Activated CD8-positive, alpha-beta memory T cell treated with anti-CD3 and anti-CD28 coated beads, Interleukin-2, amount 10 ng/mL, durations not matched to agents 7 days and 5 days (primary cell): ENCODE measurements at regions of chr4 and their contacts with region 1.

Region 1: GRCh38 chr4:5998333-5998936 is 19.8 kb downstream of the C4orf50 start:
- DNase-seq: peak; percentile 66
- ATAC-seq: peak; percentile 77
- H3K4me3 Mint-ChIP-seq: no peak overlapping the region
- H3K27ac Mint-ChIP-seq: no peak overlapping the region
- H3K4me1 Mint-ChIP-seq: peaks cover 18% of the 10 kb centered on the region
- H3K27me3 Mint-ChIP-seq: peaks cover 7% of the 10 kb centered on the region

Region 2: GRCh38 chr4:5957076-5957475 is 41.4 kb before region 1 on chr4:
- CTCF ChIA-PET with region 1: no interaction called
- DNase-seq: no peak
- ATAC-seq: no peak
- H3K4me3 Mint-ChIP-seq: no peak overlapping the region
- H3K27ac Mint-ChIP-seq: no peak overlapping the region
- H3K4me1 Mint-ChIP-seq: peaks cover 16% of the 10 kb centered on the region
- H3K27me3 Mint-ChIP-seq: no peaks in the 10 kb centered on the region

Region 3: DNA sequence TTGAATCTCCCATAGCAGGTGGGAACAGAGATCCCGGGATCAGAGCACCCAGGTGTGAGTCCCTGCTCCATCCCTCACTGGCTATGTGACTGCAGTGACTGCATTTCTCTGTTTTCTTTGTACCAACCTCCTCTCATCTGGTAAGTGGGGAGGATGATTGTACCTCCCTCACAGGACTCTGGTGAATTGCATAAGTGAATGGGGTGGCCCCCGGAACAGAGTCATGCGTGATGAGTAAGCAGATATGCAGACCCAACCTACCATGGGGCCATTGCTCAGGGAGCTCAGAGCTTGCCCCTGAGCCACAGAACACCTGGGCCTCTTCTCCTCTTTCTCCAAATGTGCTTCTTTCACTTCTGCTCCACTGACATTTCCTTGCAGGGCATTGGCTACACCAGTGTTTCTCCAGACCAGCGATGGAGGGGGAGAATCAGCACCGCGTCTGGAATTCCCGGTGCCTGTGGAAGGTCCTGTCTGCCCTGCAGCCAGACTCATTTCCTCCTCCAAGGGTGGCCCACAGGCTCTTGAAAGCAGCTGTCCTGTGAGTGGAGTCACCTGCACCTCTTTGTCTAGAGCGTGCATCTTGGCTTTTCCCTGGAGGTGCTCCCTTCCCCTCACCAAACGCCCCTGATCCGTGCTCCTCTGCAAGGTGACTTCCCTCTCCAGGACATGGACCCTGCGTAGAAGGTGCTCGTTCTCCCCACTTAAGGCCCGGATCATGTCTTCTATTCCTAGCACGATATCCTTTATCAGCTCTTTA is 10.2 kb before region 1 on chr4:
- CTCF ChIA-PET with region 1: interaction called, 11 read pairs
- DNase-seq: no peak
- ATAC-seq: no peak
- H3K4me3 Mint-ChIP-seq: no peak overlapping the region
- H3K27ac Mint-ChIP-seq: no peak overlapping the region
- H3K4me1 Mint-ChIP-seq: no peaks in the 10 kb centered on the region
- H3K27me3 Mint-ChIP-seq: peaks cover 7% of the 10 kb centered on the region

Region 4: DNA sequence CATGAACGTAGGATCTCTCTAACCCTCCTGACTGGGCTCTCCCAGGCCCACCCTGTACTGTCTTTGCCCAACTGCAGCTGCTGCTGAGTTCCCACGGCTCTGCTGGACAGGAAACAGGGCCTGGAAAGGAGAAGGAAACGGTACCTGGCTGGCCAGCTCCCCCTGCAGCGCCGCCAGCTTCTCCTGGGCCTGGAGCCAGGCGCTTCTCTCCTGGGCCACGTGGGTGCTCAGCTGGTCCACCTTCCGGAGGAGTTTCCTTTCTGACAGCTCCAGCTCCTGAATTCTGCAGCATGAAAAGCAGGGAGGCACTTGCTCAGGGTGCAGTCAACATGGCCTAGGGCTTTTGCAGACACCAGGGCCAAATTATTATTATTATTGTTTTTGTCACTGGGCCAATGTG is 13.3 kb after region 1 on chr4:
- CTCF ChIA-PET with region 1: interaction called, 15 read pairs
- DNase-seq: no peak
- ATAC-seq: no peak
- H3K4me3 Mint-ChIP-seq: no peak overlapping the region
- H3K27ac Mint-ChIP-seq: no peak overlapping the region
- H3K4me1 Mint-ChIP-seq: peaks cover 5% of the 10 kb centered on the region
- H3K27me3 Mint-ChIP-seq: peaks cover 33% of the 10 kb centered on the region

Region 5: GRCh38 chr4:6278801-6279197 is 280.4 kb after region 1 on chr4:
- CTCF ChIA-PET with region 1: interaction called, 11 read pairs
- DNase-seq: peak; percentile 73
- ATAC-seq: peak; percentile 78
- H3K4me3 Mint-ChIP-seq: no peak overlapping the region
- H3K27ac Mint-ChIP-seq: peak overlapping the region; percentile 66
- H3K4me1 Mint-ChIP-seq: peaks cover 14% of the 10 kb centered on the region
- H3K27me3 Mint-ChIP-seq: peaks cover 15% of the 10 kb centered on the region